Adrenal gland (tissue), 19 donors: ENCODE measurements at regions of chr11 and their contacts with region 1.

Region 1: GRCh38 chr11:61797263-61797944 is 4.7 kb downstream of the FEN1 start:
- DNase-seq: peak; percentile 79 to 96 (median 83)
- H3K4me3 ChIP-seq: no peak overlapping the region
- H3K27ac ChIP-seq: peak overlapping the region; percentile 33 to 85 (median 57)
- H3K4me1 ChIP-seq: peaks cover 5 to 16% of the 10 kb centered on the region in 2 donors
- H3K27me3 ChIP-seq: no peaks in the 10 kb centered on the region
- CTCF ChIP-seq: peak; percentile 72 to 96 (median 92)
- POLR2A ChIP-seq: no peak

Region 2: DNA sequence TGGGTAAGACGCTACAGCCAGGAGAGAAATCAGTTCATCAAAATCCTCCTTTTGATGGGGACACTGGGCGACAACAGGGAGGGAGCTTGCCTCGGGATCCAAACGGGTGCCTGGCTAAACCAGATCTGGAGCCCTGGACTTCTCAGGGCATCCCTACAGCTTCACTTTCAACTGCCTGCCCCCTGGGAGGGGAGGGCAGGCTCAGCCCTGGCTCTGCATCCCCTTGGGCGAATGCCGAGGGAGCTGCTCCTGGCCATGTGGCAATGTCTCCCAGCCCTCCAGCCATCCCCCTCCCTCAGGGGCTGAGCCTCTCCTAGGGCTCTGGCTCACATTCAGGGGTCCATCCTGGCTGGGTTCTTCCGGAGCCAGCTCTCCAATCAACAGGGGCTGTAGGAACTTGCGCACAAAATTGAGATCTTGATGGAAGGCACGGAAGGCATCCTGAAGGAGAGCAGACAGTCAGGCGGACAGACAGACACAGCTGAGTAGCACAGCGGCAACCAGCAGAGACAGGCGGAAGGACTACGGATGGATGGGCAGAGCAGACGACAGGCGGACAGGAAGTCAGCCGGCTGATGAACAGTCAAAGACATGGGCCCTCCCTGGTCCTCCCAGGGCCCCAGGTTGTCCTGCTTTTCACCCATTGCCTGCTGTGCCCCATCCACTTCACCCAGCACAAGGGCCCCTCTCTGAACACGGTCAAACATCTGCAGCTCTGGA is 82.5 kb after region 1 on chr11:
- intact Hi-C with region 1: loop called in 1 of 2 experiments (anchors 5 kb)
- DNase-seq: no peak
- H3K4me3 ChIP-seq: no peak overlapping the region
- H3K27ac ChIP-seq: no peak overlapping the region
- H3K4me1 ChIP-seq: no peaks in the 10 kb centered on the region
- H3K27me3 ChIP-seq: no peaks in the 10 kb centered on the region
- CTCF ChIP-seq: no peak
- POLR2A ChIP-seq: no peak